GM18951 (cell line): ENCODE measurements at regions of chr6 and their contacts with region 1.

Region 1: DNA sequence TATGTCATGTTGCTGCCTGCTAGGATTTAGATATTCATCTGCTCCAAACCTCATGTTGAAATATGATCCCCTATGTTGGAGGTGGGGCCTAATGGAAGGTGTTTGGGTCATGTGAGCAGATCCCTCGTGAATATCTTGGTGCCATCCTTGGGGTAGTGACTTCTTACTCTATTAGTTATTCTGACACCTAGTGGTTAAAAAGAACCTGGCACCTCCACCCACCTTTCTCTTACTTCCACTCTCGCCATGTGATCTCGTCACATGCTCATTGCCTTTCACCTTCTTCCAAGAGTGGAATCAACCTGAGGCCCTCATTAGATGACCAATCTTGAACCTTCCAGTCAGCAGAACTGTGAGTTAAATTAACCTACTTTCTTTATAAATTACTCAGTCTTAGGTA is 549.4 kb upstream of the SYNCRIP start:
- POLR2A ChIP-seq: no peak

Region 2: GRCh38 chr6:85756982-85757381 is 435.1 kb before region 1 on chr6:
- in situ Hi-C with region 1: loop called (anchors 25 kb)
- POLR2A ChIP-seq: no peak

Region 3: GRCh38 chr6:85923013-85923430 is 269.1 kb before region 1 on chr6:
- in situ Hi-C with region 1: loop called (anchors 25 kb)
- POLR2A ChIP-seq: no peak

Region 4: DNA sequence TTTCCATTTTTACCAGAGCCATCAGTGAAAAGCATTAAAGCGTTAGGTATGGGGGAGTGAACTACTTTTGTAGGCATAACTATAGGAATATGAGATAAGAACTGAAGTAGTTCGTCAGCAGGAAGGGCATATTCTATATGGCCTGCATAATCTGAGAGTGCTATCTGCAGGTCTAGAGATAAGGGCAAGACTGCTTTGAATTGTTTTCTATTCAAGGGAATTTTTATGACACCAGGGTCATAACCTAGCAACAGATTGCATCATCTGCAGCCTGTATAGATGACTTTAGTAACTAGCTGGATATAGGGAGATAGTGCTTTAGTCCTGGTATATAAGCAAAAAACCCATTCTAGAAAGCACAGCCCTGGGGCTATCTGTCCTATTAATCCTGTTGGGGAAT is 307.9 kb after region 1 on chr6:
- in situ Hi-C with region 1: no loop called
- POLR2A ChIP-seq: no peak